AG04449 (cell line): ENCODE measurements at regions of chr13 and their contacts with region 1.

Region 1: GRCh38 chr13:91375116-91375729 is 23.2 kb upstream of the GPC5 start:
- DNase-seq: no peak
- H3K4me3 ChIP-seq: no peak overlapping the region
- CTCF ChIP-seq: peak; percentile 39

Region 2: GRCh38 chr13:91406619-91407018 is 31.4 kb after region 1 on chr13:
- CTCF ChIA-PET with region 1: interaction called, 17 read pairs
- POLR2A ChIA-PET with region 1: no interaction called
- DNase-seq: no peak
- H3K4me3 ChIP-seq: no peak overlapping the region
- CTCF ChIP-seq: peak; percentile 41